Activated CD4-positive, alpha-beta T cell treated with anti-CD3 and anti-CD28 coated beads, Interleukin-2, amount 10 ng/mL, durations not matched to agents 24 days and 14 days (primary cell): ENCODE measurements at regions of chr13 and their contacts with region 1.

Region 1: GRCh38 chr13:50421473-50422130 is 406.4 kb downstream of the KCNRG start:
- DNase-seq: no peak
- H3K4me3 Mint-ChIP-seq: no peak overlapping the region
- H3K27ac Mint-ChIP-seq: no peak overlapping the region
- H3K4me1 Mint-ChIP-seq: peaks cover 7% of the 10 kb centered on the region
- H3K27me3 Mint-ChIP-seq: no peaks in the 10 kb centered on the region

Region 2: GRCh38 chr13:50222569-50223332 is 198.9 kb before region 1 on chr13:
- intact Hi-C with region 1: loop called (anchors 10 kb)
- DNase-seq: peak; percentile 56
- H3K4me3 Mint-ChIP-seq: no peak overlapping the region
- H3K27ac Mint-ChIP-seq: no peak overlapping the region
- H3K4me1 Mint-ChIP-seq: peaks cover 37% of the 10 kb centered on the region
- H3K27me3 Mint-ChIP-seq: peaks cover 40% of the 10 kb centered on the region

Region 3: GRCh38 chr13:50244713-50245574 is 176.7 kb before region 1 on chr13:
- intact Hi-C with region 1: loop called (anchors 5 kb)
- DNase-seq: peak; percentile 78
- H3K4me3 Mint-ChIP-seq: peak overlapping the region; percentile 41
- H3K27ac Mint-ChIP-seq: peak overlapping the region; percentile 73
- H3K4me1 Mint-ChIP-seq: peaks cover 34% of the 10 kb centered on the region
- H3K27me3 Mint-ChIP-seq: peaks cover 33% of the 10 kb centered on the region

Region 4: DNA sequence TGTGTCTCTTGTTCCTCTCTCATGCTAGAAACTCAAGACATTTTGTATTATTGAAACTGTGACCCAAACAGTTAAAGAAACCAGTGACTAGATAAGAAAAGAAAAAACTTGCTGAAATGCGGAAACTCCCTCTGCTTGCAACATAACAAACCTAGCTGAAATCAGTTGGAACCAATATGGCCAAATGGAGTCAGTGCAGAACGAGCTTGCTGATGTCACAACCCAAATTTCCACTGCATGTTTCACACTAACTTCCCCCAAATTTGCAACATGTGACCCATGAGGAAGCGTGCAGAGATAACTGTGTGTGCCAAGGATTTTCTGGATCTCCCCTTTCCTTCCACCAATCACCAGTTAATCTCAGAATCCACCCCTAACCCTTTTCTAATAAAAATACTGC is 213.9 kb after region 1 on chr13:
- intact Hi-C with region 1: no loop called
- DNase-seq: no peak
- H3K4me3 Mint-ChIP-seq: no peak overlapping the region
- H3K27ac Mint-ChIP-seq: peak overlapping the region; percentile 26
- H3K4me1 Mint-ChIP-seq: peaks cover 7% of the 10 kb centered on the region
- H3K27me3 Mint-ChIP-seq: peaks cover 4% of the 10 kb centered on the region